ENCODE measurements at regions of chr12 and their contacts with region 1.

Region 1: DNA sequence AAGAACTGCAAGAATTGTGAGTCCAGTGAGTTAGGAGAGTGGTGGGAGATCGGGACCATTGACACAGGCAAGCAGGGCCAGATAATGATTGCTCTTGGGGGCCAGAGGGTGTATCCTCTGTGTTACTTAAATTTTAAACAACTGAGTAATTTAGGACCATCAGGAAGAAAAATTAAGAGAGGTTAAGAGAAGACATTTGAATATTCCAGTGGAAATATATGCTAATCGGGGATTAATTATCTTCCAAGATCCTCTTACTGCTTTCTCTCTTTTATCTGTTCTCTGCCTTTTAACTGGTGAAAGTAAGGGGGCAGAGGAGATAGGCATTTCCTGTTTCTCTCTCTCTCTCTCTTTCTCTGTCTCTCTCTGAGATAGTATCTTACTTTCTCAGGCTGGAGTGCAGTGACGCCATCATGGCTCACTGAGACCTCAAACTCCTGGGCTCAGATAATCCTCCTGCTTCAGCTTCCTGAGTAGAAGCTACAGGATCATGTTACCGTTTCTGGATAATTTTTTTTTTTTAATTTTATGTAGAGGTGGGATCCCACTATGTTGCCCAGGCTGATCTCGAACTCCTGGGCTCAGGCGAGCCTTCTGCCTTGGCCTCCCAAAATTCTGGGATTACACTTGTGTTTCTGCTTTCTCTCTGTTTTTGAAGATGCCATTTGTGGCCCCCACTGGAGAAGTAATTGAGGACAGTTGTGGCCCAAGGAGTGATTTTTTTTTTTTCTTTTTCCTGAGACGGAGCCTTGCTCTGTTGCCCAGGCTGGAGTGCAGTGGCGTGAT is 85.1 kb downstream of the DIP2B start:
- DNase-seq: peak in 2 of 4 experiments; percentile 75 to 92
- ATAC-seq: peak; percentile 95
- H3K4me3 ChIP-seq: peak overlapping the region; percentile 11; the same call in 1 of the 2 replicates
- H3K27ac ChIP-seq: peak overlapping the region; percentile 98
- H3K4me1 ChIP-seq: peaks cover 7 to 14% of the 10 kb centered on the region in 2 experiments; a peak in 4 of 5 replicates
- H3K27me3 ChIP-seq: no peaks in the 10 kb centered on the region
- CTCF ChIP-seq: peak in 1 of 3 experiments; percentile 19; a peak in 1 of 6 replicates
- EP300 ChIP-seq: peak; percentile 92
- POLR2A ChIP-seq: no peak
- RAD21 ChIP-seq: 0 out of 4 replicates have a peak, but pooled peaks have one; percentile 17 to 18

Region 2: DNA sequence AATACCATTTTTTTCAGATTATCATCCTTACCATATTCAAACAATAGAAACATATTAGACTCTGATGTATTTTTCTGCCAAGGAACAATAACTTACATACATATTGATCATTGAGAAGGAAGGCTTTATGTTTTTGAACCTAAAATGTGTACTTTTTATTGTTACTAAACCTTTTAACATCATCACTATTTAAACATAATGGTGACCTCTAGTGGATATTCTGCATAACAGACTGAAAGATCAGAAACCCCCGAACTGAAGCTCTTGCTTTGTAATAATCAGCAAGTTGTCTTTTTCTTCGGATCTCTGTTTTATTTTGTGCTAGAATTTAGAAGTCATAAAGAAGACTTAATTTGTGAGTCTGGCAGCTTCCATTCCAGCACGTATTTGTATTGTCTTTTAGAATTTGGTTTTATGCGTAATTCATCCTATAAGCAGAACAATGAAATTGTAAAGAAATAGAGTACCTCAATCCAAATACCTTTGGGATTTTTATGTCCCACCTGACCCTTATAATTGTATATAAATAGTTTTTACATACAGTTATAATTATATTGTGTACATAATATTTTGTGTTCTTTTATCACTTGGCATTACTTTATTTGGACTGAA is 48.1 kb after region 1 on chr12:
- CTCF ChIA-PET with region 1: no interaction called
- POLR2A ChIA-PET with region 1: no interaction called
- in situ Hi-C with region 1: no loop called
- intact Hi-C with region 1: loop called (anchors 5 kb)
- DNase-seq: peak in 2 of 4 experiments; percentile 43 to 50
- ATAC-seq: peak; percentile 49; the same call in 2 of the 3 replicates
- H3K4me3 ChIP-seq: no peak overlapping the region
- H3K27ac ChIP-seq: no peak overlapping the region
- H3K4me1 ChIP-seq: peaks cover 6 to 14% of the 10 kb centered on the region in 2 experiments; a peak in 4 of 5 replicates
- H3K27me3 ChIP-seq: no peaks in the 10 kb centered on the region
- CTCF ChIP-seq: peak; percentile 41 to 77 (median 49); a peak in 4 of 6 replicates
- EP300 ChIP-seq: no peak
- POLR2A ChIP-seq: no peak
- RAD21 ChIP-seq: peak; percentile 91 to 92

Measured in K562 (cell line).